Ovary (tissue), 10 donors: ENCODE measurements at regions of chr4 and their contacts with region 1.

Region 1: GRCh38 chr4:121736735-121737351 is 28.1 kb downstream of the SMIM43 start:
- DNase-seq: peak in 2 of 5 donors; percentile 18 to 32
- H3K4me3 ChIP-seq: no peak overlapping the region
- H3K27ac ChIP-seq: no peak overlapping the region
- H3K4me1 ChIP-seq: no peaks in the 10 kb centered on the region
- H3K27me3 ChIP-seq: no peaks in the 10 kb centered on the region
- CTCF ChIP-seq: peak in 2 of 3 donors; percentile 30
- EP300 ChIP-seq: no peak
- POLR2A ChIP-seq: no peak

Region 2: GRCh38 chr4:121370729-121371325 is 366.0 kb before region 1 on chr4:
- intact Hi-C with region 1: loop called in 2 of 4 experiments (anchors 10 kb)
- DNase-seq: peak in 3 of 5 donors; percentile 30 to 40 (median 31)
- H3K4me3 ChIP-seq: no peak overlapping the region
- H3K27ac ChIP-seq: no peak overlapping the region
- H3K4me1 ChIP-seq: no peaks in the 10 kb centered on the region
- H3K27me3 ChIP-seq: no peaks in the 10 kb centered on the region
- CTCF ChIP-seq: peak in 1 of 3 donors; percentile 31
- EP300 ChIP-seq: no peak
- POLR2A ChIP-seq: no peak

Region 3: DNA sequence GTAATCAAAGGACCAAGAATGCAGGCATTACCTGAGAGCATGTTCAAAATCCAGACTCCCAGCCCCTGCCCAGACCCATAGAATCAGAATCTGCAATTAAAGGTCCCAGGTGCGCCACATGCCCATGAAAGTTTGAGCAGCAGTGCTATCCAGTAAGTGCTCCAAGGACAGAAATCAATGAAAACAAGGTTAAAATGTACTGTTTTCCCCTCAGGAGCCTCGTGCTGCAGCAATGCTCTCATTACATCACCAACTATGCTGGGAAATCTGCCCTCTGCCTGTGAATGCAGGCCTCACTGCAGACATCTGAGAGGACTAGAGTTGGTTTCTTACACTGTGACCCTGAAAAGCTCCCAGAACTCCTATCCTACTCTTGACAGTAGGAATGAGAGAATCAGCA is 61.1 kb before region 1 on chr4:
- intact Hi-C with region 1: loop called in 1 of 4 experiments (anchors 10 kb)
- DNase-seq: no peak
- H3K4me3 ChIP-seq: no peak overlapping the region
- H3K27ac ChIP-seq: no peak overlapping the region
- H3K4me1 ChIP-seq: peaks cover 2% of the 10 kb centered on the region
- H3K27me3 ChIP-seq: no peaks in the 10 kb centered on the region
- CTCF ChIP-seq: no peak
- EP300 ChIP-seq: no peak
- POLR2A ChIP-seq: no peak

Region 4: DNA sequence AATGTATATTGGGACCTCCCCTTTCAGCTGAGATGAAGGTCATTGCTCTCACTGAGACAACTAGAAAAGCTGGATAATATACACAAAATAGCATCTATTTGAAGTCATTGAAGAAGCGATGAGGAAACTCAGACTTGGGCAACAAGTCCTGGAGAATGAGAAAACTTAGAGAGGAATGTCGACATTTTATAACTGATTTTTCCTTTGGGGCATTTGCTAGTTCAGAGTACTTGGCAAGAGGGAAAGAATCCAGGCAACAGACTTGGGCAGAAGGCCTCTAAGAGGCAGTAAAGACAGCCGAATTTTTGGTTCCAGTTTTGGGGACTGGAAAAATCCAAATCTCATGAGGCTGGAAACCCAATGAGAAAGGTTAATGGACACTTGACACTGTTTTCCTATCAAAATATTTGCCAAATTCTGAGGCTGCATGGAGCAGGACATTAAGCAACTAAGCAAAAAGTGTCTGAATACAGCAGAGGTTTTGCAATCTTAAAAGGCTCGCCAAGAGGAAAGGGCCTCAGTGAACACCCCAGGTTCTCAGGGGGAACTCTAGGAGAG is 19.1 kb before region 1 on chr4:
- intact Hi-C with region 1: no loop called
- DNase-seq: no peak
- H3K4me3 ChIP-seq: no peak overlapping the region
- H3K27ac ChIP-seq: no peak overlapping the region
- H3K4me1 ChIP-seq: no peaks in the 10 kb centered on the region
- H3K27me3 ChIP-seq: no peaks in the 10 kb centered on the region
- CTCF ChIP-seq: no peak
- EP300 ChIP-seq: no peak
- POLR2A ChIP-seq: no peak